HepG2 (cell line): ENCODE measurements at regions of chr12 and their contacts with region 1.

Region 1: GRCh38 chr12:101773650-101774162 is 34.4 kb upstream of the SYCP3 start:
- DNase-seq: peak; percentile 44
- ATAC-seq: peak; percentile 76
- H3K4me3 ChIP-seq: no peak overlapping the region
- H3K27ac ChIP-seq: no peak overlapping the region
- H3K4me1 ChIP-seq: peaks cover 12% of the 10 kb centered on the region
- H3K27me3 ChIP-seq: no peaks in the 10 kb centered on the region
- CTCF ChIP-seq: peak; percentile 85
- EP300 ChIP-seq: no peak
- POLR2A ChIP-seq: no peak
- RAD21 ChIP-seq: peak; percentile 73

Region 2: DNA sequence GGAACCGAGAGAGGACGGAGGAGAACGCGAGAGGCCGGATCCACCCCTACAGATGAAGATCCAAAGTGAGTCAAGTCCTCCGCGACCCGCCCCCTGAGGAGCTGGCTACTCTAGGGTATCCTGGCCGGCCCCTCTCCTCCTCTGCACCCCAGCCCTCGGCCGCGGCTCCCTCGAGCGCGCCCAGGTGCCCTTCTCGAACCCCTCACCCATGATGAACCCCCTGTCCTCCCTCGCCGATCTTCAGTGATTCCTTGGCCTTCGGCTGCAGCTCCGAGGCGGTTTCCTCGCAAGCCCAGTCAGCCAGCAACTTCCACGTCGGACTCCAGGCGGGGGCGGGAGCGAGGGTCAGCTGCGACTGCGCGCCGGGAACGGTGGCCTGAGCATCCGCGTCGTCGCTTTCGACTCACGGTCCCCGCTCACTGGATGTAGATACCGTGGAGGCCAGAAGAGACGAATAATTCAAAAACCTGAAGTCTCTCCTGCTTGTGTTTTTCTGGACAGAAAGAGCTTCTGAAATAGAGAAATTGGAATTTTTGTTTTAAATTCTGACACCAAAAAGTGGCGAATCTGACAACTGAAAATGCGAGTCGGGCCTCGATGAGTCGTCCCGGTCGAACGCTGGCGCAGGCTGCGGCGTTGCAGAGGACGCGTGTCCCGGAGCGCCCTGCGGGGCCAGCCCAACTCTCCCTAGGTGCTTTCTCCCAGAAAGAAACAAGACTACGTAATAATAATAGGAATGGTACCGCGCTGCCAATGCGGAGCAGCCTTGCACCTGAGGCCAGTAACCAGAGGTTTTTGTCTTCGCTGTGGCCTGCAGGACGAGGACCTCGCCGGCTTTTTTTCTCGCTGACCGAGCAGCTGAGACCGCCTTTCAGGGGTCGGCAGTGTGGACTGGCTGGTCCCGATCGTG is 366.0 kb before region 1 on chr12 and contains the start of gene ARL1:
- CTCF ChIA-PET with region 1: no interaction called
- POLR2A ChIA-PET with region 1: no interaction called
- in situ Hi-C with region 1: loop called (anchors 25 kb)
- intact Hi-C with region 1: no loop called
- DNase-seq: peak; percentile 79
- ATAC-seq: peak; percentile 94
- H3K4me3 ChIP-seq: peak within 1 kb of the TSS; percentile 71 to 93 (median 91)
- H3K27ac ChIP-seq: peak within 1 kb of the TSS; percentile 81
- H3K4me1 ChIP-seq: peaks cover 26% of the 10 kb centered on the region
- H3K27me3 ChIP-seq: no peaks in the 10 kb centered on the region; a peak in 1 of 5 replicates
- CTCF ChIP-seq: 0 out of 2 replicates have a peak, but pooled peaks have one; percentile 9
- EP300 ChIP-seq: peak in 1 of 2 experiments; percentile 66; a peak in 1 of 4 replicates
- POLR2A ChIP-seq: peak; percentile 76 to 92
- RAD21 ChIP-seq: 0 out of 2 replicates have a peak, but pooled peaks have one; percentile 8
- total RNA-seq, gene ARL1: 114 and 123 TPM in 2 replicates

Region 3: DNA sequence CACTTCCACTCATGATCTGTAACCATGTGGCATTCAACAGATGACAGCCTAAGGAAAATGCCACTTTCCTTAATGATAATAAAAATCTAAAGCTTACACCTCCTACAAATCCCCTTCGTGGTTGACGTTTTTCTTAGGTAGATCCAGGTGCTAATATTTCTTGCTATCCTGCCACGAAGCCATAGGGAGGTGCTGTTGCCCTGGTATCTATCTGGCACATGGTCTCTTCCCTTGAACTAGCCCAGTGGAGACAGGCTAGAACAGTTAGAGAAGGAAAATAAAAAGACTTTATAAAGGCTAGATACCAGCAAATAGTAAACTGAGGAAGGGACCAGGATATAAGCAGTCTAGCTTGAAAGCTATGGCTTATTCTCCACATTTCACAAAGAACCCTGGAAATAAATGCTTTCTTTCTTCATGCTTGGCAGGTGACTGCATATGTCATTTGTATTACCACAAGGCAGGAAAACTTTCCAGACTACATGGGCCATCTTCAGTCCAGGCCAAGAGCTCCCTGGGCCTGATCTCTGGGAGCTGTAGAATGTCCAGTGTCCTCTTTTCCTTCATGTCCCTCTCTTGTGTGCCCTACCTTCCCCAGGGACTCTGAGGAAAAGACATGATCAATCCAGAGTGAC is 283.3 kb before region 1 on chr12:
- CTCF ChIA-PET with region 1: no interaction called
- POLR2A ChIA-PET with region 1: no interaction called
- in situ Hi-C with region 1: no loop called
- intact Hi-C with region 1: loop called (anchors 1 kb)
- DNase-seq: peak; percentile 61
- ATAC-seq: peak; percentile 93
- H3K4me3 ChIP-seq: no peak overlapping the region
- H3K27ac ChIP-seq: no peak overlapping the region
- H3K4me1 ChIP-seq: peaks cover 10% of the 10 kb centered on the region
- H3K27me3 ChIP-seq: peaks cover 0 to 4% of the 10 kb centered on the region in 2 experiments; a peak in 1 of 5 replicates
- CTCF ChIP-seq: peak; percentile 80
- EP300 ChIP-seq: no peak
- POLR2A ChIP-seq: no peak
- RAD21 ChIP-seq: peak; percentile 70; the same call in 1 of the 2 replicates

Region 4: DNA sequence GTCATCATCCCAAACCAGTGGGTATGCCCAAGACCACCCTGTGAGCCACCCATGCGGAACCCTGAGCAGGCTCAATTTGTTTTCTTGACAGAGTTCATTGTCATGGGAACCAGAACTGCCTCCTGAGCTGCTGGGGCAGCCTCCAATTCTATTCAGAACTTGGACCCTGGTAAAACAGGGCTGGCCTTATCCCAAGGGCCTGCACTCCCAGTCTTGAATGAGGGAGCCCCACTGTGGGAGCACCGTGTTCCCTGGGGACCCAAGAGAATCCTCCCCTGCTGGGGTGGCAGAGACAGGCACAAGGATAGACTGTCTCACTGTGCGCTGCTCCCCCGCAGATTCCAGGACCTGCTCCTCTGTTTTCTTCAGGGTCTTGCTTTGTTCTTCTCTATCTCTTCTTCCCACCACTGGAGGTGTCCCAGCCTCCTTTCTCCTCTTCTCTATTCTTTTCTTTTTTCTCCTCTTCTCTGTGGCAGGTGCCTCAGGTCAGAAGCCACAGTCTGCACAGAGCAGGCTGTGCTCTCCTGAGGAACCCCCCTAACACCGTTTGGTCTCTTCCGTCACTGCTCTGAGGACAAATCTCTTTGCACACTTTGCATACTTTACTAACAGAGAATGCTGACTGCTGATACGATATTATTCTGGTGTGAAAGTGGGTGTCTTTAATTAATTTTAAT is 107.5 kb before region 1 on chr12:
- CTCF ChIA-PET with region 1: no interaction called
- POLR2A ChIA-PET with region 1: no interaction called
- in situ Hi-C with region 1: no loop called
- intact Hi-C with region 1: no loop called
- DNase-seq: no peak
- ATAC-seq: no peak
- H3K4me3 ChIP-seq: no peak overlapping the region
- H3K27ac ChIP-seq: no peak overlapping the region
- H3K4me1 ChIP-seq: peaks cover 56% of the 10 kb centered on the region
- H3K27me3 ChIP-seq: no peaks in the 10 kb centered on the region
- CTCF ChIP-seq: no peak
- EP300 ChIP-seq: no peak
- POLR2A ChIP-seq: no peak
- RAD21 ChIP-seq: no peak

Region 5: DNA sequence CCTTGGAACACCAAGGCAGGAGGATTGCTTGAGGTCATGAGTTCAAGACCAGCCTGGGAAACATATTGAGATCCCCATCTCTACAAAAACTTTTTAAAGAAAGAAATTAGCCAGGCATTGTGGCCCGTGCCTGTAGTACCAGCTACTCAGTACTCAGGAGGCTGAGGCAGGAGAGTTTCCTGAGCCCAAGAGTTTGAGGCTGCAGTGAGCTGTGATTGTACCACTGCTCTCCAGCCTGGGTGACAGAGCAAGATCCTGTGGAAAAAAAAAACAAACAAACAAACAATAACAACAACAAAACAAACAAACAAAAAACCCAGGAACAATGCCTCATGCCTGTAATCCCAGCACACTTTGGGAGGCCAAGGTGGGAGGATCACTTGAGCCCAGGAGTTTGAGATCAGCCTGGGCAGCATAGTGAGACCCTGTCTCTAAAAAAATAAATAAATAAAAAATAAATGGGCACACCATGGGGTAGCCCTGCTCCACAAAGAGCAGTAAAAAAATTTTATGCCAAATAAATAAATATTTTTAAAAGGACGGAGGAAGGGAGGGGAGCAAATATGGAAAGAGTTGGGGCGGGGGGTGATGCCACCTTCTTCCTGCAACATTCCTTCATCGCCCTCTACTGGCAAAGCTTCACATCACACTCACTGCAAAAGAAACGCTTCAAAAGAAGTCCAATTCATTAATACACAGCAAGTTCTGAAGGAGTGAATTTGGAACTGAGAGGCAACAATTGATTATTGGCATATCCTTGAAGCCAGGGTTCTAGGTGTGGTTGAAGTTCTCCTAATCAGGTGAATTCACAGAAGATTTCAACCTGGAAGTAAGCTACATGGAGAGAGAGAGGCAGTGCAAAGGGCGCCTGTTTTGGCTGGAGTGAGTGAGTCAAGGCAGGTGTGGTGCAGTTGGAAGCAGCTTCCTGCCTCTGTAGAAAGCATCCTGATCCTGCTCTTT is 65.9 kb after region 1 on chr12:
- CTCF ChIA-PET with region 1: interaction called, 23 read pairs
- POLR2A ChIA-PET with region 1: no interaction called
- in situ Hi-C with region 1: loop called (anchors 5 kb)
- intact Hi-C with region 1: loop called (anchors 1 kb)
- DNase-seq: peak; percentile 64
- ATAC-seq: peak; percentile 87
- H3K4me3 ChIP-seq: no peak overlapping the region
- H3K27ac ChIP-seq: no peak overlapping the region
- H3K4me1 ChIP-seq: peaks cover 7% of the 10 kb centered on the region
- H3K27me3 ChIP-seq: no peaks in the 10 kb centered on the region; a peak in 2 of 5 replicates
- CTCF ChIP-seq: peak; percentile 79
- EP300 ChIP-seq: no peak
- POLR2A ChIP-seq: no peak
- RAD21 ChIP-seq: 0 out of 2 replicates have a peak, but pooled peaks have one; percentile 15